GM12878 (cell line): ENCODE measurements at regions of chr17 and their contacts with region 1.

Region 1: GRCh38 chr17:48024937-48025906 is 12.4 kb downstream of the COPZ2 start:
- DNase-seq: peak; percentile 70
- ATAC-seq: peak; percentile 91
- H3K4me3 ChIP-seq: peak overlapping the region; percentile 80
- H3K27ac ChIP-seq: no peak overlapping the region
- H3K4me1 ChIP-seq: peaks cover 27% of the 10 kb centered on the region
- H3K27me3 ChIP-seq: no peaks in the 10 kb centered on the region; a peak in 2 of 4 replicates
- CTCF ChIP-seq: peak; percentile 85 to 98 (median 89)
- EP300 ChIP-seq: no peak
- POLR2A ChIP-seq: peak; percentile 54; the same call in 1 of the 2 replicates
- RAD21 ChIP-seq: peak; percentile 88

Region 2: GRCh38 chr17:47970704-47971463 is 54.3 kb before region 1 on chr17 and contains the start of gene CDK5RAP3:
- CTCF ChIA-PET with region 1: interaction called, 454 read pairs
- POLR2A ChIA-PET with region 1: interaction called, 3 read pairs
- RAD21 ChIA-PET with region 1: interaction called, 80 read pairs
- SMC1A ChIA-PET with region 1: interaction called, 332 read pairs
- in situ Hi-C with region 1: no loop called
- intact Hi-C with region 1: no loop called
- DNase-seq: peak; percentile 97
- ATAC-seq: peak; percentile 98
- H3K4me3 ChIP-seq: peak within 1 kb of the TSS; percentile 92
- H3K27ac ChIP-seq: peak within 1 kb of the TSS; percentile 83
- H3K4me1 ChIP-seq: peaks cover 15% of the 10 kb centered on the region
- H3K27me3 ChIP-seq: no peaks in the 10 kb centered on the region
- CTCF ChIP-seq: peak; percentile 97 to 100 (median 99); a peak in 5 of 6 replicates
- EP300 ChIP-seq: no peak
- POLR2A ChIP-seq: peak; percentile 97
- RAD21 ChIP-seq: peak; percentile 45
- polyA plus RNA-seq, gene CDK5RAP3: 69.4 to 160 TPM

Region 3: GRCh38 chr17:48037036-48037837 is 12.0 kb after region 1 on chr17 and contains the start of gene COPZ2:
- CTCF ChIA-PET with region 1: interaction called, 59 read pairs
- POLR2A ChIA-PET with region 1: interaction called, 5 read pairs
- RAD21 ChIA-PET with region 1: interaction called, 35 read pairs
- SMC1A ChIA-PET with region 1: interaction called, 17 read pairs
- in situ Hi-C with region 1: no loop called
- intact Hi-C with region 1: no loop called
- DNase-seq: no peak
- ATAC-seq: peak; percentile 93
- H3K4me3 ChIP-seq: peak within 1 kb of the TSS; percentile 73
- H3K27ac ChIP-seq: no peak within 1 kb of the TSS
- H3K4me1 ChIP-seq: peaks cover 9% of the 10 kb centered on the region
- H3K27me3 ChIP-seq: peaks cover 3 to 4% of the 10 kb centered on the region in 2 experiments; a peak in 3 of 4 replicates
- CTCF ChIP-seq: peak; percentile 67 to 91 (median 73)
- EP300 ChIP-seq: no peak
- POLR2A ChIP-seq: no peak
- RAD21 ChIP-seq: peak; percentile 20; the same call in 1 of the 2 replicates
- polyA plus RNA-seq, gene COPZ2: 2.5 to 2.9 TPM

Region 4: GRCh38 chr17:48068491-48068961 is 43.3 kb after region 1 on chr17:
- CTCF ChIA-PET with region 1: interaction called, 176 read pairs
- POLR2A ChIA-PET with region 1: interaction called, 7 read pairs
- RAD21 ChIA-PET with region 1: interaction called, 117 read pairs
- SMC1A ChIA-PET with region 1: interaction called, 100 read pairs
- in situ Hi-C with region 1: loop called (anchors 5 kb)
- intact Hi-C with region 1: no loop called
- DNase-seq: no peak
- ATAC-seq: peak; percentile 84
- H3K4me3 ChIP-seq: no peak overlapping the region
- H3K27ac ChIP-seq: no peak overlapping the region
- H3K4me1 ChIP-seq: no peaks in the 10 kb centered on the region
- H3K27me3 ChIP-seq: no peaks in the 10 kb centered on the region
- CTCF ChIP-seq: peak; percentile 15 to 43 (median 39); a peak in 3 of 6 replicates
- EP300 ChIP-seq: no peak
- POLR2A ChIP-seq: 0 out of 2 replicates have a peak, but pooled peaks have one; percentile 18
- RAD21 ChIP-seq: no peak

Region 5: GRCh38 chr17:48107168-48108132 is 82.2 kb after region 1 on chr17 and contains the start of gene SNX11:
- CTCF ChIA-PET with region 1: interaction called, 48 read pairs
- POLR2A ChIA-PET with region 1: interaction called, 5 read pairs
- RAD21 ChIA-PET with region 1: interaction called, 16 read pairs
- SMC1A ChIA-PET with region 1: interaction called, 6 read pairs
- in situ Hi-C with region 1: no loop called
- intact Hi-C with region 1: no loop called
- DNase-seq: no peak
- ATAC-seq: peak; percentile 88
- H3K4me3 ChIP-seq: peak within 1 kb of the TSS; percentile 97
- H3K27ac ChIP-seq: peak within 1 kb of the TSS; percentile 80
- H3K4me1 ChIP-seq: peaks cover 6% of the 10 kb centered on the region
- H3K27me3 ChIP-seq: no peaks in the 10 kb centered on the region
- CTCF ChIP-seq: peak in 2 of 3 experiments; percentile 7 to 20; a peak in 1 of 6 replicates
- EP300 ChIP-seq: no peak
- POLR2A ChIP-seq: peak; percentile 91
- RAD21 ChIP-seq: no peak
- polyA plus RNA-seq, gene SNX11: 61.3 to 75.6 TPM

Region 6: GRCh38 chr17:48593840-48594537 is 568.8 kb after region 1 on chr17:
- CTCF ChIA-PET with region 1: interaction called, 8 read pairs
- POLR2A ChIA-PET with region 1: no interaction called
- RAD21 ChIA-PET with region 1: interaction called, 16 read pairs
- SMC1A ChIA-PET with region 1: no interaction called
- in situ Hi-C with region 1: no loop called
- intact Hi-C with region 1: no loop called
- DNase-seq: no peak
- ATAC-seq: peak; percentile 75
- H3K4me3 ChIP-seq: no peak overlapping the region; the same call in 1 of the 2 replicates
- H3K27ac ChIP-seq: no peak overlapping the region
- H3K4me1 ChIP-seq: peaks cover 10% of the 10 kb centered on the region
- H3K27me3 ChIP-seq: peaks cover 5 to 33% of the 10 kb centered on the region in 2 experiments
- CTCF ChIP-seq: peak; percentile 91 to 97 (median 94)
- EP300 ChIP-seq: no peak
- POLR2A ChIP-seq: no peak
- RAD21 ChIP-seq: peak; percentile 80